ENCODE measurements at regions of chr1 and their contacts with region 1.

Region 1: GRCh38 chr1:31644560-31645273 is at the start of gene PEF1:
- H3K4me3 Mint-ChIP-seq: peak within 1 kb of the TSS; percentile 98
- H3K27ac Mint-ChIP-seq: peak within 1 kb of the TSS; percentile 98
- H3K4me1 Mint-ChIP-seq: peaks cover 10% of the 10 kb centered on the region
- H3K27me3 Mint-ChIP-seq: no peaks in the 10 kb centered on the region

Region 2: DNA sequence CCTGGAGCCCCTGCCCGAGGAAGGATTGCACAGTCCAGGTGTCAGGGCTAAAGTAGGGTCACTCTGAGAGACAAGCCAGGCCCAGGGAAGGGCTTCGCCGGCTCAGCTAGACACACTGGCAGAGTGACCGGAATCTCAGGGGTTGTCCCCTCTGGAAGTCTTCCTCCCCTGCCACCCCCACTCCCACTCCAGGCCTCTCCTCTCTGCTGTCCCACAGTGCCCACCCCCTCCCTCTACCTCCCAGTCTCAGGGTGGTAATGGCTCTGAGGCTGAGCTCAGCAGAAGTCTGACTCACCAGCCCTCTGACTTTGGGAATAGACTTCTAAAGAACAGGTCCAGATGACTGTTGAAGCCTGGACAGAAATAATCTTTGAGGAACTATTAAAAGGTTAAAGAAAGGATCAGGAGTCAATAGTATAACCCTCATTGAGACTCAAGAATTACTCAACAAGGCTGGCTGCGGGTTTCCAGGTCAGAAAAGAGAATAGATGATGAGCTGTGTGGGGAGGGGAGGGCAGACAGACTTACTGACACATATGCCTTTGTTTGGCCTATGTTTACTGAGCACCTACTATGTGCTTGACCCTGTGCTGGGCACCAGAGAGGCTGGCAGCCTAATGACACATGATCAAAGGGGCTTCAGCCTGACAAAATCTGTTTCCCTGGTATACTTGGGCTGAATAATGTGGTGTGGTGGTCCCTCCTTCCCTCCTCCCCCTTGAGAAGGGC is 19.1 kb before region 1 on chr1:
- intact Hi-C with region 1: loop called (anchors 2 kb)
- H3K4me3 Mint-ChIP-seq: no peak overlapping the region
- H3K27ac Mint-ChIP-seq: peak overlapping the region; percentile 75
- H3K4me1 Mint-ChIP-seq: peaks cover 70% of the 10 kb centered on the region
- H3K27me3 Mint-ChIP-seq: no peaks in the 10 kb centered on the region

Region 3: GRCh38 chr1:31723828-31724359 is 79.2 kb after region 1 on chr1:
- intact Hi-C with region 1: no loop called
- H3K4me3 Mint-ChIP-seq: no peak overlapping the region
- H3K27ac Mint-ChIP-seq: no peak overlapping the region
- H3K4me1 Mint-ChIP-seq: no peaks in the 10 kb centered on the region
- H3K27me3 Mint-ChIP-seq: peaks cover 28% of the 10 kb centered on the region

Region 4: GRCh38 chr1:31955917-31956736 is 311.4 kb after region 1 on chr1:
- intact Hi-C with region 1: no loop called
- H3K4me3 Mint-ChIP-seq: peak overlapping the region; percentile 30
- H3K27ac Mint-ChIP-seq: peak overlapping the region; percentile 60
- H3K4me1 Mint-ChIP-seq: peaks cover 75% of the 10 kb centered on the region
- H3K27me3 Mint-ChIP-seq: no peaks in the 10 kb centered on the region

Measured in dendritic cell treated with granulocyte-macrophage colony-stimulating factor and Interleukin-4, amounts not matched to agents 40 ng/mL and 50 ng/mL, for 4 days (primary cell).